ENCODE measurements at regions of chr1 and their contacts with region 1.

Region 1: DNA sequence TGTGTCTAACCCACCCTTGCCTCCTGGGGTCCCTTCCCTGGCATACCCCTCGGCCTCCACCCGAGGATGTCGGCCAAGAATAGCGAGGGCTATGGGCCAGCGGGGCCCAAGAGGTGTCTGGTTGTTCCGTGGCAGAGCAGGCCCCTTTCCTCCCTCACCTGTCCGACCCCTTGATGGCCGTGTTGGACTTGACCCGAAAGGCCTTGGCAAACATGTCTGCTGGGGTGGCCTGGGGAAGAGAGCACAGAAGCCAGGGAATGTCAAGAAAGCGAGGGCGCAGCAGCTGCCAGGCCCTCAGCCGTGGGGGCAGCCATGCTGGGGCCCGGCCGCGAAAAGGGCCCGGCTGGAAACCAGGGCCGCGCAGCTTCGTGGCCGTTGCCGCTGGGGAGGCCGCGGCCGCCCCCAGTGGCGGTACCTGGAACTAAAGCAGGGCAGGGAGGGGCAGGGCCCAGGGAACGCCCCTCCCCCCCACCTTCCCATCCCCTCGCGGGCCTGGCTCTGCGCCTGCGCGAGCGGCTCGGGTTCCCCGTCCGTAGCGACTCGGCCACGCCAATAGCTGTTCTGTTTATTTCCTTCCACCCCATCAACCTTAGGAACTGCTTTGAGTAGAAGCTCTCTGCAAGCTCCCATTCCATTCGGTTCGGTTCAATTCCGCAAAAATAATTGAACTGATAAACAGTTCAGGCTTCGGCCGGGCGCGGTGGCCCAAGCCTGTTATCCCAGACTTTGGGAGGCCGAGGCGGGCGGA is at the start of gene EIF2D:
- DNase-seq: peak; percentile 89 to 96 (median 94)
- ATAC-seq: peak; percentile 99
- H3K4me3 ChIP-seq: peak within 1 kb of the TSS; percentile 90 to 91
- H3K4me3 Mint-ChIP-seq: peak within 1 kb of the TSS; percentile 92
- H3K27ac ChIP-seq: peak within 1 kb of the TSS; percentile 84 to 86
- H3K27ac Mint-ChIP-seq: peak within 1 kb of the TSS; percentile 96
- H3K4me1 ChIP-seq: peaks cover 9% of the 10 kb centered on the region
- H3K4me1 Mint-ChIP-seq: peaks cover 17% of the 10 kb centered on the region
- H3K27me3 ChIP-seq: no peaks in the 10 kb centered on the region
- H3K27me3 Mint-ChIP-seq: no peaks in the 10 kb centered on the region
- CTCF ChIP-seq: peak; percentile 91
- total RNA-seq, gene EIF2D: 42.0 to 49.2 TPM

Region 2: GRCh38 chr1:205211169-205211838 is 1401.0 kb before region 1 on chr1 and contains the start of gene DSTYK:
- CTCF ChIA-PET with region 1: no interaction called
- POLR2A ChIA-PET with region 1: no interaction called
- intact Hi-C with region 1: loop called (anchors 2 to 5 kb)
- DNase-seq: peak; percentile 83 to 96 (median 91)
- ATAC-seq: peak; percentile 92
- H3K4me3 ChIP-seq: peak within 1 kb of the TSS; percentile 55 to 93
- H3K4me3 Mint-ChIP-seq: peak within 1 kb of the TSS; percentile 96
- H3K27ac ChIP-seq: peak within 1 kb of the TSS; percentile 58 to 80
- H3K27ac Mint-ChIP-seq: peak within 1 kb of the TSS; percentile 98
- H3K4me1 ChIP-seq: peaks cover 15% of the 10 kb centered on the region
- H3K4me1 Mint-ChIP-seq: peaks cover 50% of the 10 kb centered on the region
- H3K27me3 ChIP-seq: no peaks in the 10 kb centered on the region
- H3K27me3 Mint-ChIP-seq: no peaks in the 10 kb centered on the region
- CTCF ChIP-seq: no peak
- total RNA-seq, gene DSTYK: 15.4 to 17.2 TPM

Region 3: DNA sequence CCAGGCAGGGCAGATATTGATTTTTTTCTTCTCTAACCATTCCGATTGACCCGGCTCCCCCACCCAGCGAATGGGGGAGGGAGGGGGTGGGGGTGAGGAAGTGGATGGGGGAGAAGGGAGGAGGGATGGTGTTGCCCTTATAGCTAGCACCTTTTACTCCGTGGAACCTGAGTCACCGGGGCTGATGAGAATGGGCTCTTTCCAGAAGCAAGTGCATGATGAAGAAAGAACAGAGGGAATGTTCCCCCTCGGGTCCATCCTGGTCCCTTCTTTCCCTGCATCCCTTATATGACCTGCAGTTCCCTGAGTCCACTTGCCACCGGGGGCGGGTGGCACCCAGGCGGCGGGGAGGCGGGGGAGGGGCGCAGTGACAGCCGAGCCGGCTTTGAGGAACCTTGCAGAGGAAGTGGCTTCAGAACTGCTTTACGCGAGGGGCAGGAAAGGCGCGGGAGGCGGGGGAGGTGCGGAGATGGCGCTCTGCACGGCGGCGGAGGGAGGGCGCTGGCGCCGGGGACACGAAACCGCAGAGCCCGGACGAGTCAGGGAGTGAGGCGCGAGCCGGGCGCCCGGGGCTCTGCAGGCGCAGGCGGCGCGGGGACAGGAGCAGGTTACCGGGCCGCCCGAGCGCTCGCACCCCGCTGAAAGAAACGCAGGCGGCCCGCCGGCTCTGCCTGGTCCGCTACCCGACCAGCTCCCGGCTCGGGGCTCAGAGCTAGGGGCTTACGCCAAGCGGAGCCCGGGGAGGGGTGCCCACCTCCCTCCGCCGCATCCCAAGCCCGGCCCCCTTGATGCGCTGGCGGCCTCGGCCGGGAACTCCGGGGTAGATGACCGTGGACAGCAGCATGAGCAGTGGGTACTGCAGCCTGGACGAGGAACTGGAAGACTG is 55.3 kb before region 1 on chr1:
- CTCF ChIA-PET with region 1: interaction called, 8 read pairs
- POLR2A ChIA-PET with region 1: interaction called, 6 read pairs
- intact Hi-C with region 1: loop called in 1 of 2 experiments (anchors 1 kb)
- DNase-seq: peak; percentile 72 to 95 (median 92)
- ATAC-seq: peak; percentile 64
- H3K4me3 ChIP-seq: peak overlapping the region; percentile 82 to 94
- H3K4me3 Mint-ChIP-seq: peak overlapping the region; percentile 95
- H3K27ac ChIP-seq: peak overlapping the region; percentile 81
- H3K27ac Mint-ChIP-seq: peak overlapping the region; percentile 95
- H3K4me1 ChIP-seq: peaks cover 69% of the 10 kb centered on the region
- H3K4me1 Mint-ChIP-seq: peaks cover 79% of the 10 kb centered on the region
- H3K27me3 ChIP-seq: no peaks in the 10 kb centered on the region
- H3K27me3 Mint-ChIP-seq: no peaks in the 10 kb centered on the region
- CTCF ChIP-seq: no peak

Region 4: GRCh38 chr1:206583707-206584648 is 28.3 kb before region 1 on chr1:
- CTCF ChIA-PET with region 1: interaction called, 9 read pairs
- POLR2A ChIA-PET with region 1: interaction called, 3 read pairs
- intact Hi-C with region 1: loop called in 1 of 2 experiments (anchors 2 kb)
- DNase-seq: peak; percentile 70 to 93 (median 89)
- ATAC-seq: peak; percentile 18
- H3K4me3 ChIP-seq: no peak overlapping the region
- H3K4me3 Mint-ChIP-seq: peak overlapping the region; percentile 77
- H3K27ac ChIP-seq: peak overlapping the region; percentile 3 to 95
- H3K27ac Mint-ChIP-seq: peak overlapping the region; percentile 96
- H3K4me1 ChIP-seq: peaks cover 50% of the 10 kb centered on the region
- H3K4me1 Mint-ChIP-seq: peaks cover 68% of the 10 kb centered on the region
- H3K27me3 ChIP-seq: no peaks in the 10 kb centered on the region
- H3K27me3 Mint-ChIP-seq: no peaks in the 10 kb centered on the region
- CTCF ChIP-seq: peak; percentile 92

Region 5: DNA sequence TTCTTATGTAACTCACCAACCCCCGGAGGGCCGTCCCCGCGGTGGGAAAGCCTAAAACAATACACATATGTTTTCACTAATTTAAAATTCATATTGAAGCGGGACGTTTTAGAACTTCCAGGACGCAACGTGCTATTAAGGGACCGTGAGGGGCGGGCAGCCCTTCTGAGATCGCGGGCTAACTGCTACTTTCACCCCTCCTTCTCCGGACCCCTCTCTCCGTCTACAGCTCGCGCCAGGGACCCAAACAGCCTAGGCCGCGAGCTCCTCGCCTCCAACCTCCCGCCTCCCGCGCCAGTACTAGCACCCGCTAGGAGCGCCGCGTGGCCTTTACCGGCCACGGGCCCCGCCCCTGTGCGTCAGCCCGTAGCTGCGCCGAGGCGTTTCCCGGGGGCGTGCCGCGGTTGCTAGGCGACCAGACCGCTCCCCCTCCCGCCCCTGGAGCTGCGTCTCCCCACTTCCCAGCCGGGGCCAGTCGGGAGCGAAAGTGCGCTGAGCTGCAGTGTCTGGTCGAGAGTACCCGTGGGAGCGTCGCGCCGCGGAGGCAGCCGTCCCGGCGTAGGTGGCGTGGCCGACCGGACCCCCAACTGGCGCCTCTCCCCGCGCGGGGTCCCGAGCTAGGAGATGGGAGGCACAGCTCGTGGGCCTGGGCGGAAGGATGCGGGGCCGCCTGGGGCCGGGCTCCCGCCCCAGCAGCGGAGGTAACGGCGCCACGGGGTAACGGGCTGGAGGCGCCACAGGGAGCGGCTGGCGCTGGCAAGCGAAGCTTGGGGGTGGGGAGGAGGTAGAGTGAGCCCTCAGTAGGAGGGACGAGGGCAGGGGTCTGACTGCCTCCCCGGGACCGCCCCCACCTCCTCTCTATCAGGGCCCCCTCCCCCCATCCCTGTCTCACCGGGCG is 23.0 kb after region 1 on chr1 and contains the start of gene DYRK3:
- CTCF ChIA-PET with region 1: interaction called, 15 read pairs
- POLR2A ChIA-PET with region 1: interaction called, 9 read pairs
- intact Hi-C with region 1: loop called (anchors 1 to 2 kb)
- DNase-seq: peak; percentile 63 to 94 (median 88)
- ATAC-seq: peak; percentile 94
- H3K4me3 ChIP-seq: peak within 1 kb of the TSS; percentile 58 to 79
- H3K4me3 Mint-ChIP-seq: peak within 1 kb of the TSS; percentile 85
- H3K27ac ChIP-seq: peak within 1 kb of the TSS; percentile 9 to 12
- H3K27ac Mint-ChIP-seq: peak within 1 kb of the TSS; percentile 70
- H3K4me1 ChIP-seq: peaks cover 15% of the 10 kb centered on the region
- H3K4me1 Mint-ChIP-seq: peaks cover 16% of the 10 kb centered on the region
- H3K27me3 ChIP-seq: no peaks in the 10 kb centered on the region
- H3K27me3 Mint-ChIP-seq: peaks cover 15% of the 10 kb centered on the region
- CTCF ChIP-seq: no peak
- total RNA-seq, gene DYRK3: 0.94 to 1.4 TPM

Region 6: DNA sequence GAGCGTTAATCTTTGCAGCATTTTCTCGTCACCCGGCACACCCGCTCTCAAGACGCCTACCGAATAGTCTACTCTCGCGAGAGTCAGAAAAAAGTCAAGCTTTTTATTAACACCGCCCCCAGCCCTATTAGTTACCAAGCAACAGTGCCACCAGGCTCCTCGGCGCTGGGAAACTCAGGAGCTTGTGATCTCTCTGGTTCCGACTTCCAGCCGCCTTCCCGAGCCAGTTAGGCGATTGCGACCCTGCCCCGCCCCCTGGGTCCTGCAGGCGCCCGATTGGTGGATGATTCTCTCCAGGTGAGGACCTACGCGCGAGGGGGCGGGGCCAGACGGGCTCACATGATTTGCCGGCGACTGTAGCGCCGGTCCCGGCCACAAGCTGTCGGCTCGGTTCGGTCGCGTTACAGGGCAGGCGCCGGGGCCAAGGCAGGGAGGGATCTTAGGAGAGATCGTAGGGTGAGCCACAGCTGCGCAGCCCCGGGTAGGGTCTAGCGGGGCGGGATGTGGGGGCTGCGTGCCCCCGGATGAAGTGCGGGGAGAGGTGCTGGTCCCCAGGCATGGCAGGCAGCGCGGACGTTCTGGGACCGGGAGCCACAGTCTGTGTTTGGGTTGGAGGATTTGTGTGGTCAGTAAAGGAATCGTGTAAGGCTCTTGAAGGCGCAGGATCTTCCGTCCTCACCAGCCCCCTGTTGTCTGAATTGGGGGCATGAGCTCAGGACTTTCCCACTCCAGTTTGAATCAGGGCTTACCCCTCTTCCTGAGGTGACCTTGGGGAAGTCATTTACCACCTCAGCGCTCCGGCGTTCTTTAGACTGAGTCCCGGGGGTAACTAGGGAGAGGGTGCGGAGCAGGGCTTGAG is 440.8 kb after region 1 on chr1 and contains the start of gene PFKFB2:
- CTCF ChIA-PET with region 1: no interaction called
- POLR2A ChIA-PET with region 1: no interaction called
- intact Hi-C with region 1: loop called (anchors 1 to 5 kb)
- DNase-seq: peak; percentile 88 to 97 (median 95)
- ATAC-seq: peak; percentile 87
- H3K4me3 ChIP-seq: peak within 1 kb of the TSS; percentile 70 to 82
- H3K4me3 Mint-ChIP-seq: peak within 1 kb of the TSS; percentile 97
- H3K27ac ChIP-seq: peak within 1 kb of the TSS; percentile 70 to 83
- H3K27ac Mint-ChIP-seq: peak within 1 kb of the TSS; percentile 98
- H3K4me1 ChIP-seq: peaks cover 28% of the 10 kb centered on the region
- H3K4me1 Mint-ChIP-seq: peaks cover 44% of the 10 kb centered on the region
- H3K27me3 ChIP-seq: no peaks in the 10 kb centered on the region
- H3K27me3 Mint-ChIP-seq: no peaks in the 10 kb centered on the region
- CTCF ChIP-seq: peak; percentile 21
- total RNA-seq, gene PFKFB2: 8.1 to 8.5 TPM

Region 7: DNA sequence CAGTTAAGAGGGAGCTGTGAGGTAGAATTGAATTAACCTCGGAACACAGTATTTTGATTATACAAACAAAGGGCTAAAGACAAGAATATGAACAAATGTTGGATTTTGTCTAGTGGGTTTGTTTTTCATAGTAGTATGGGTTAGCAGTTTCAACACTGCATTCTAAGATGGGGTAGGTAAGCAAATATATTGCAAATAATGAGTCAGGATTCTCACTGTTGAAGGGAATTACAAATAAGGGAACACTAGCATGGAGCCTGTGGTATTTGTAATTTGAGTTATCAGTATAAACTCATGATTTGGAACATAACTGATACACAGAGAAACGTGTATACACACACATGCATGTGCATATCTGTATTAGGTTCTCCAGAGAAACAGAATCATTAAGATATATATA is 753.7 kb after region 1 on chr1:
- CTCF ChIA-PET with region 1: no interaction called
- POLR2A ChIA-PET with region 1: no interaction called
- intact Hi-C with region 1: no loop called
- DNase-seq: no peak
- ATAC-seq: no peak
- H3K4me3 ChIP-seq: no peak overlapping the region
- H3K4me3 Mint-ChIP-seq: no peak overlapping the region
- H3K27ac ChIP-seq: no peak overlapping the region
- H3K27ac Mint-ChIP-seq: no peak overlapping the region
- H3K4me1 ChIP-seq: peaks cover 33% of the 10 kb centered on the region
- H3K4me1 Mint-ChIP-seq: peaks cover 2% of the 10 kb centered on the region
- H3K27me3 ChIP-seq: no peaks in the 10 kb centered on the region
- H3K27me3 Mint-ChIP-seq: no peaks in the 10 kb centered on the region
- CTCF ChIP-seq: no peak

Measured in CD8-positive, alpha-beta T cell (primary cell).